Activated CD4-positive, alpha-beta T cell treated with anti-CD3 and anti-CD28 coated beads, Interleukin-2, amount 10 ng/mL, durations not matched to agents 7 days and 5 days (primary cell): ENCODE measurements at regions of chr6 and their contacts with region 1.

Region 1: GRCh38 chr6:43496370-43497128 is 13.6 kb downstream of the LRRC73 start:
- DNase-seq: no peak
- H3K4me3 Mint-ChIP-seq: no peak overlapping the region
- H3K27ac Mint-ChIP-seq: no peak overlapping the region
- H3K4me1 Mint-ChIP-seq: peaks cover 19% of the 10 kb centered on the region
- H3K27me3 Mint-ChIP-seq: no peaks in the 10 kb centered on the region

Region 2: DNA sequence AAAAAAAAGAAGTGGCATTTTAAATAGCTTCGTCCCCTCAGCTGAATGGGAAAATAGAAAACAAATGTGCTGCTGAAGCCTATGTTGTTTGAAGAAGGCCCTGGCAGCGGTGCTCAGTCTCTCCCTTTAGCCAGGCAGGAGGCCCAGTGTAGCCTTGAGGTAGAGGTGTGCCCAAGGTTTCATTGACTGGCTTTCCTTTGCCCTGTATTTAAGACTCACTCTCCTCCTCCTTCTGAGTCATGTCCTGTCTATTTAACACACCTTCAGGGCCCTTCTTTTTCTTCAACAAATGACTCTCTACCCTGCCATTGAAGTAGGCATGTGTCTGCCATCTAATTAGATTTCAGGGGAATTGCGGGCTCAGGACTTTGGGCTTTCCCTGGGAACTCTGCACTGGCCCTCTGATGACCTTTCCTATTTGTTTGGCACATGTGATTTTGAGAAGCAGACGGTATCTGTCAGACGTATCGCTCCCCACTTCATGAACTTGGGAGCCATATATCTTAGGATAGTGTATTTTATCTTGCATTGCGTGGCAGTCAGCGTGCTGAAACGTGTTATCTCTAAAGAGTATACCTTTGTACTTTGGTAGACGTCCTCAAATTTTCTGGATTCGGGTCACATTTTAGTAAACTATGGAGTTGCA is 14.8 kb before region 1 on chr6:
- CTCF ChIA-PET with region 1: interaction called, 19 read pairs
- POLR2A ChIA-PET with region 1: no interaction called
- DNase-seq: no peak
- H3K4me3 Mint-ChIP-seq: no peak overlapping the region
- H3K27ac Mint-ChIP-seq: no peak overlapping the region
- H3K4me1 Mint-ChIP-seq: peaks cover 44% of the 10 kb centered on the region
- H3K27me3 Mint-ChIP-seq: no peaks in the 10 kb centered on the region